Posterior cingulate gyrus (tissue), 11 donors: ENCODE measurements at regions of chr3 and their contacts with region 1.

Region 1: DNA sequence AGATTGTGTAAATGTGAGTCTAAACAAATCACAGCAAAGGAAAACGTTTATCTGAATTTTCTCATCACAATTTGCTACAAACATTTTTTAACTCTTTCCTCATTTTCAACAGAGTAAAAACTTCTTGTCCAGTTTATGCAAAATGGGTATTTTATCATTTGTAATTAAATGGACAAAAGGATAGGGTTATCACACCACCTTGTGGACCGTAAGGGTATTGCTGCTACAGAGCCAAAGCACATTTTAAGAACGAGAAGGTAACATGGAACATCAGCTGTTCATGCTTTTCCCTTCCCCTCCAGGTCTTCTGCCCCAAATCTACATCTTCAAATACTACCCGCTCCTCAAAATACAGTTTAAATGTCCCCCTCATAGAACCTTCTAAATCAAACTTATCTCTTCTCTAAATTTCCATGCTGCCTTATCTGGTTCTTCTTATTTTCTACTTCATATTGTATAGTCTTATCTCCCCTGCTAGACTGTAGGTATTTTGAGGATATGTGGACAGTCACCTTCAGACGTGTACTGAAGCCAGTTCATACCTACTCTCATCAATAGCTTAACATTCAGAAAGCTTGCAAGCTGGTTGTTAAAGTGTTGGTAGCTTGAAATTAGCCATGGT is 12.8 kb upstream of the SETMAR start:
- DNase-seq: peak in 3 of 10 donors; percentile 26 to 59 (median 32)

Region 2: GRCh38 chr3:3799173-3800079 is 491.0 kb before region 1 on chr3 and contains the start of gene LRRN1:
- intact Hi-C with region 1: loop called (anchors 10 kb)
- DNase-seq: peak; percentile 74 to 98 (median 90)